Dendritic cell treated with granulocyte-macrophage colony-stimulating factor and Interleukin-4, amounts not matched to agents 40 ng/mL and 50 ng/mL, for 4 days (primary cell): ENCODE measurements at regions of chr14 and their contacts with region 1.

Region 1: DNA sequence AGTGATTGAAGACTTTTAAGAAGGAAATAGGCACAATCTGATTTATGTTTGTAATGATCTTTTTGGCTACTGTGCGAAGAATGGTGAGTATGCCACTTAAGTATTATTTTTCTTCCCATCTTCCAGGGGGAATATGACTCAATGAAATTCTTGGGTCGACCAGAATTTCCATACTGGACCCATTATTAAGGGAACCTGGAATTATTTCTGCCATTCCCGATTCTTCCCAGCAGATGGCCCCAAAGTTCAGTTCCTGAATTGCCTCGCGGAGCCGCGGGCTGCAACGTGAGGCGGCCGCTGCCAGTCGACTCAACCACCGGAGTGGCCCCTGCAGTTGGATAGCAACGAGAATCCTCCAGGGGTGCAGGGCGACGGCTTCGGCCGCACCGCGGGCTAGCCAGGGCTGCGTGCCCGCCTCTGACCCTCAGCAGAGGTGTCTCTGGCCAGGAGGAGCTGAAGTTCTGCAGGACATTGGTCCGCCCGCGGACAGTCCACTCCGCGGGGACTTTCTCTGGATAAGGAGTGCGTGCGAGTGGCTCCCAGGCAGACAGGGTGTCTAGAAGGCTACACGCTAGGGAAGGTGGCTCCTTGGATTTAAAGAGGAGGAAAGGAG is 628 bp upstream of the TSHR start:
- H3K4me3 Mint-ChIP-seq: peak overlapping the region; percentile 84
- H3K27ac Mint-ChIP-seq: peak overlapping the region; percentile 68
- H3K4me1 Mint-ChIP-seq: peaks cover 19% of the 10 kb centered on the region
- H3K27me3 Mint-ChIP-seq: peaks cover 13% of the 10 kb centered on the region

Region 2: DNA sequence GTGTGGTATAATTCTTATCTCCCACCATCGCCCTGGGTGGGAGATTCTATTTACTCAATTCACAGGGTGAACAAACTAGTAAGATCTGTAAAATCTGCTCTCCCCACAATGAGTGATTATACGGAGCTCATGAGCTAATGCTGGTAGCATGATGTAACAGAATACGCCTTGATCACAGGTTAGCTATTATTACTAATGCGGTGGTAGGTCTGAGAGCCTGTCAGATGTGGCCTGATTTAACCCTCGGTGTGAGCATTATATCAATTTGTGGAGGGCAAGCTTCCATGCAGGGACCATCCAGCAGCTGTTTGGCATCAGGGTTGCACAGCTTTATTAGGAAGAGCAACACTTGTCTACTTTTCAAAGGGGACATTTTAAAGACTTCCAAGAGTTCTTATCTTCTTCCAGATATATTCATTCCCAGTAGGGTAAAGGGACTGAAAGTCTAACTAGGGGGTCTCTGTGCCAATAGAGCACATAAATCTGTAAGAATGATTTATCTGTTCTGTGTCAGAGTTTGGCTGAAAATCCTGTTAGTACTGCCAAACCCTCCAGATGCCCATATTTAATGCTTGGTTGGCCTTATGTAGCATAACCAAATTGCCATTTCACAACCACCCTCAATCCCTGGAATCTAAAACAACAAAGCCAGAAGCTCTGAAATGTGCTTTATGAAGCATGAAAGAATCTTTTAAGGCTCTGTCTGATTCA is 19.3 kb after region 1 on chr14:
- intact Hi-C with region 1: no loop called
- H3K4me3 Mint-ChIP-seq: no peak overlapping the region
- H3K27ac Mint-ChIP-seq: no peak overlapping the region
- H3K4me1 Mint-ChIP-seq: no peaks in the 10 kb centered on the region
- H3K27me3 Mint-ChIP-seq: no peaks in the 10 kb centered on the region

Region 3: DNA sequence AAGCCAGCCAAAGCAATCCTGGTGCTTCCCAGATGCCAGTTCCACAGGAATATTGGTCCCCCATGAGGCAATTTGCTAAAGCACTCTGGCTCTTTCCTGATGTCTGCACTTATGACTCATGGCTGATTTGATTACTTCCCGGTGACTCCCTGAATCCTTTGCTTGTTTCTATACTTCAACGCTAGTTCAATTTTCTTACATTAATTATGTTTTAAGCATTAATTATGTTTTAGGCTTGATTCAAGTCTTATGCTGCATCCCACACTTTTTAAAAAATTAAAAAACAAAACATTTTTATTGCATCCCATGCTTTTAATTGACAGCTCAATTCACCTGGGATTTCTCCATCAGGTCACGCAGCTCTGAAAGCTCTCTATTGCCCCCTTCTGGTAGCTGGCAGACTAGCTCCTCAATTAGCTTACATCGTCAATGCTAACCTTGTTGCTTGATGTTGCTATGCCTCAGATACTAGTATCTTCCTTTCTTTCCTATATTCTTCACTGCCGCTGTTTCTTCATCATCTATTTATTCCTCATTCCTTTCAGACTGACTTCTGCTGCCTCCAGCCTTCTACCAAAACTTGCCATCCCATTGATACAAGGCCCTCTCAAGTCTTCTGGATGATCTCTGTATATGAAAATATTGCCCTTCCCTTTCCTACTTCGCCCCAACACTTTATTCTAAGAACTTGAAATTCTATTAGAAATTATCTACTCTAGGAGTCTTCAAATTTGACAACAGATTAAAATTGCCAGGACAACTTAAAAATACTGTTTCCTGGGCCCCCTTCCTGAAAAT is 32.6 kb after region 1 on chr14:
- intact Hi-C with region 1: loop called (anchors 1 kb)
- H3K4me3 Mint-ChIP-seq: no peak overlapping the region
- H3K27ac Mint-ChIP-seq: no peak overlapping the region
- H3K4me1 Mint-ChIP-seq: no peaks in the 10 kb centered on the region
- H3K27me3 Mint-ChIP-seq: peaks cover 5% of the 10 kb centered on the region

Region 4: DNA sequence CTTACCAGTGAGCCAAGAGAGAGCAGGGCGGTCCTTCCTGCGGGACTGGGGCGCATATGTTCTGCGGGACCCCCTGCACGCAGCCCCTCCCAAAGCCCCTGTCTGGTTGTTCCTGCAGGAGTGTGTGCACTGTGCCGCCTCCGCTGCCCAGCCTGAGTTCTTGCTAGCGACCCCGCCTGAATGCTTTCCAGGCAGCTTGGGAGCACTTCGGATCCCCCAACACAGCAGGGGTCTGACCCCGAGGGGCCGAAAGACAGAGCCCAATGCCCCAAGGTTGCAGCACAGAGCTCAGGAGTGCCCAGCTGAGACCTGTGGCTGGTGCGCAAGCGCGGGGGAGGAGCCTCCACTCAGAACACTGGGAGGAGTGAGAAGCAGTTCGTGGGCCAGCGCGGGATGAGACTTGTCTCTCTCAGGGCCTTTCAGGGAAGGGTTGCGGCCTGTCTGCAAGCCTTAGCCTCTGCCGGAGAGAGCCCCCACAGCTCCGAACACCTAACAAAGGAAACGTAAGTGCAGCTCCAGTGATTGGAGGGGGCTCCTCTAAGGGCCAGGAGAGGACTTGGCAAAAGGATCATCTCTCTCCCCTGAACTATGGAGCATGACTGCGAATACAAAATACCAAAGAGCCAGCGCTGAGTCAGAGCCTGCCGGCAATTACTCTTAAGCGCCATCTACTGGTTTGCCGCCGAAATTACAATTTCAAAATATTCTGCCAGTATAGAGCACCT is 215.5 kb after region 1 on chr14:
- intact Hi-C with region 1: loop called (anchors 2 kb)
- H3K4me3 Mint-ChIP-seq: peak overlapping the region; percentile 83
- H3K27ac Mint-ChIP-seq: peak overlapping the region; percentile 99
- H3K4me1 Mint-ChIP-seq: peaks cover 61% of the 10 kb centered on the region
- H3K27me3 Mint-ChIP-seq: no peaks in the 10 kb centered on the region

Region 5: DNA sequence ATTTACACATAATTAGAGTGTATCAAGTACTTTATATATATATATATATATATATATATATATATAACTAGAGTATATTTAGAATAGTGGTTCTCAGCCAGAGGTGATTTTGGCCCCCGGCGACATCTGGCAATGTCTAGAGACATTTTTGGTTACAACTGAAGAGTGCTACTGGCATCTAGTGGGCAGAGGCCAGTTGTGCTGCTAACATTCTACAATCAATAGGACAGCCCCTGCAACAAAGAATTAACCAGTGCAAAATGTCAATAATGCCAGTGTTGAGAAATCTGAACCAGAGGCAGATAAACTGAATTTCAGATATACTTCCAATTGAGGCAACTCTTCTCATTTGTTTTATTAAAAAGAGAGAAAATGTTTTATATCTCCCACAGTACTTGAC is 257.1 kb after region 1 on chr14:
- intact Hi-C with region 1: loop called (anchors 2 kb)
- H3K4me3 Mint-ChIP-seq: no peak overlapping the region
- H3K27ac Mint-ChIP-seq: no peak overlapping the region
- H3K4me1 Mint-ChIP-seq: peaks cover 47% of the 10 kb centered on the region
- H3K27me3 Mint-ChIP-seq: no peaks in the 10 kb centered on the region

Region 6: GRCh38 chr14:81464247-81465002 is 509.6 kb after region 1 on chr14:
- intact Hi-C with region 1: loop called (anchors 5 kb)
- H3K4me3 Mint-ChIP-seq: peak overlapping the region; percentile 57
- H3K27ac Mint-ChIP-seq: peak overlapping the region; percentile 67
- H3K4me1 Mint-ChIP-seq: peaks cover 7% of the 10 kb centered on the region
- H3K27me3 Mint-ChIP-seq: peaks cover 3% of the 10 kb centered on the region